ENCODE measurements at regions of chr2 and their contacts with region 1.

Region 1: GRCh38 chr2:56372071-56372656 is 188.4 kb downstream of the CCDC85A start:
- DNase-seq: no peak
- H3K4me3 ChIP-seq: no peak overlapping the region
- H3K27ac ChIP-seq: no peak overlapping the region
- H3K4me1 ChIP-seq: no peaks in the 10 kb centered on the region
- H3K27me3 ChIP-seq: no peaks in the 10 kb centered on the region
- CTCF ChIP-seq: no peak

Region 2: DNA sequence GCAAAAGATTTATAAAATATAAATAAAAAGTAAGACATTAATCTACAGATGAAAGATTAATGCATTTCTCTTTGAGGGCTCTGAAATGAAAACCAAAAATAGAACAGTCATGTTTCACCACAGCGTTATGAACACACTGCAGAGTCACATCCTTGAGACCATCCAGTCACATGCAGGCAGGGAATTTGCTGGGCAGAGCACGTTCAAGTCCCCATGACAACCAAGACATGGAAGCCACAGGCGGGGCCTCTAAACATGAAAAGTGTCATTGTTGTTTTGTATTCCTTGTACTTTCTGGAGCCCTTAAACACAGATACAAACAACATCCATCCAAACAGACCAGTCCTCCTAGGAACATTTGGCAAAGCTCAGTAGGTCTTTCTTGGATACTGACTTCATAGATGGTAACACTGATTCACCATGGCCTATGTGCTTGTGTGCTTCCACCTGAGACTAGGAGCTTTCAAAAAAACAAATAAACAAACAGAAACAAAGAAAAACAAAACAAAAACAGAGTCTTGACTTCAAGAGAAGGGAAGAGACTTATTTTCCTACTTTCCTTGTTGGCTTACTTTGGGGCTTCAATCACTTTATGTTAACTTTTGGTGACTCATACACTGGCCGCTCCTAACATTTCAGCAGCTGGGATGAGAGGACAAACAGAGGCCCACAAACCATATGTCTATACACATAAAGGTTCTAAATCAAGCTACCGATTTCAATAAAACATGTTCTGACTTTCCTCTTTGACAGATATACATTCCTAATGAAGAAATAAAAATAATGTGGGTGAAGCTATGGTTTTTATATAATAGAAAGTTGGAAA is 287.8 kb before region 1 on chr2:
- CTCF ChIA-PET with region 1: no interaction called
- POLR2A ChIA-PET with region 1: no interaction called
- intact Hi-C with region 1: no loop called
- DNase-seq: no peak
- H3K4me3 ChIP-seq: no peak overlapping the region
- H3K27ac ChIP-seq: no peak overlapping the region
- H3K4me1 ChIP-seq: no peaks in the 10 kb centered on the region
- H3K27me3 ChIP-seq: no peaks in the 10 kb centered on the region
- CTCF ChIP-seq: no peak

Region 3: GRCh38 chr2:56202381-56203121 is 169.6 kb before region 1 on chr2:
- CTCF ChIA-PET with region 1: no interaction called
- POLR2A ChIA-PET with region 1: no interaction called
- intact Hi-C with region 1: no loop called
- DNase-seq: no peak
- H3K4me3 ChIP-seq: no peak overlapping the region
- H3K27ac ChIP-seq: no peak overlapping the region
- H3K4me1 ChIP-seq: no peaks in the 10 kb centered on the region
- H3K27me3 ChIP-seq: peaks cover 36% of the 10 kb centered on the region
- CTCF ChIP-seq: no peak

Region 4: DNA sequence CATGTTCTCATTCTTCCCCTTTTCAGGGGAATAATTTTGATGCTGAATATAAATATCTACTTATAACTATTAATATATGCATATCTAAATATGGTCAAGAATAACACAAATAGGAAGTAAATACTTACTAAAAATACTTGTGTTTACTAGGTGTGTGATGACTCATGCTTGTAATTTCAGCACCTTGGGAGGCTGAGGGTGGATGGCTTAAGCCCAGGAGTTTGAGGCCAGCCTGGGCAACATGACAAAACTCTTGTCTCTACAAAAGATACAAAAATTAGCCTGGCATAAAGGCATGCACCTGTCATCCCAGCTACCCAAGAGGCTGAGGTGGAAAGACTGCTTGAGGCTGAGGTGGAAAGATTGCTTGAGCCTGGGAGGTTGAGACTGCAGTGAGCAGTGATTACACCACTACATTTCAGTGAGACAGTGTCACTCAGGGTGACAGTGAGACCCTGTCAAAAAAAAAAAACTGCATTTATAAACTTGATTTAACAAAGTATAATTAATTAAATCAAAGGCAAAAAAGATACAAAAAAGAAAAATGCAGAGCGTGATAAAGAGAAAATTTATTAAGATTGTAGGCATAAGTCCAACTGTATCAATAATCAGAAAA is 971.3 kb after region 1 on chr2:
- CTCF ChIA-PET with region 1: no interaction called
- POLR2A ChIA-PET with region 1: no interaction called
- intact Hi-C with region 1: loop called (anchors 5 kb)
- DNase-seq: peak in 1 of 2 experiments; percentile 12
- H3K4me3 ChIP-seq: no peak overlapping the region
- H3K27ac ChIP-seq: no peak overlapping the region
- H3K4me1 ChIP-seq: no peaks in the 10 kb centered on the region
- H3K27me3 ChIP-seq: no peaks in the 10 kb centered on the region
- CTCF ChIP-seq: no peak